ENCODE measurements at regions of chr15 and their contacts with region 1.

Region 1: DNA sequence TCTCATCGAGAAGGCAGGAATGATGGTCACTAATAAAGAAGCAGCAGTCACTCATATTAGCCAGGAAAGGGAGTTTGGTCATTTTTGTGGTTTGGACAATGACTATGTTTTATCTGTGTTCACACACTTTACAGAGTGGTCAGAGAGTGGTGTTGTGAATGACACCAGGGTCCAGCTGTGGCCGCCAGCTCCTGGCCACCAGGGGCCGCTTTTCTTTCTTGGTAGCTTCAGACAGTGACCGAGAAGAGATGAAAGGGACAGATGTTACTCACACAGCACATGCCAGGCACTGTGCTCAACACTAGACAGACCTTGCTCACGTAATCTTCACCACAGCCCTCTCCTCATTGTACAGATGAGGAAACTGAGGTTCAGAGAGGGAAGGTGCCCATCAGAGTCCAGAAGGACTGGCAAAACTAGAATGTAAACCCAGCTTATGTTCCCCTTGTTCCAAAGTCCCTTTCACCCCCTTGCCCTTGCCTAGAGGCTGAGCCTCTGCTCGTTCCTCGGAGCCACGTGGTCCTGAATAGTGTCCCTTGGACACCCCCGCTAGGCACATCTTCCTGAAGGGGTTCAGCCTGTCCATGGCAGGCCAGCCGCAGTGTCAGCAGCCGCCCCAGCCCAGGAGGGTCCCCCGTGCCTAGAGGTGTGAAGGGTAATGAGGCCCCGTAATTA is 55.6 kb downstream of the CYP11A1 start:
- DNase-seq: peak in 1 of 3 donors; percentile 28
- ATAC-seq: peak; percentile 23
- H3K4me3 ChIP-seq: no peak overlapping the region
- H3K4me1 ChIP-seq: no peaks in the 10 kb centered on the region
- CTCF ChIP-seq: no peak

Region 2: DNA sequence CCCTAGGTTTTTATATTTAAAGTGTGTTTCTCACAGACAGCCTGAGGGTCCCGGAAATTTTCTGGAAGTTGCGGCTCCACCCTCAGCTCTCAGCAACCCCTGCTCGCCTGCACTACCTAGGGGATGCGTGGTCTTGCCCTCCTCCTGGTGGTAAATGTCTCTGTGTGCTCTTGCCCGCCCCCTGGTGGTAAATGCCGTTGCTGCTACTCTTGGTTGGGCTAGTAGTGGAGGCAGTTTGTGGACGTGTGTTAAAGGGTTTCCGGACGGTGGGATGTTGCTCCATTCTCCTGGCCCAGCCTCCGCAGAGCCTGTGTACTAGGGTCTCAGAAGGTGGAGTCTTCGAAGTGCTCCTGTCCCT is 347.2 kb before region 1 on chr15:
- intact Hi-C with region 1: loop called in 1 of 2 experiments (anchors 10 kb)
- DNase-seq: peak; percentile 80 to 94 (median 87)
- ATAC-seq: peak; percentile 93
- H3K4me3 ChIP-seq: no peak overlapping the region
- H3K4me1 ChIP-seq: peaks cover 4% of the 10 kb centered on the region
- CTCF ChIP-seq: peak; percentile 89

Region 3: GRCh38 chr15:74253211-74253921 is 58.5 kb before region 1 on chr15:
- intact Hi-C with region 1: no loop called
- DNase-seq: no peak
- ATAC-seq: no peak
- H3K4me3 ChIP-seq: no peak overlapping the region
- H3K4me1 ChIP-seq: no peaks in the 10 kb centered on the region
- CTCF ChIP-seq: no peak

Measured in mucosa of descending colon (tissue), 3 donors.